ENCODE measurements at regions of chr2 and their contacts with region 1.

Region 1: GRCh38 chr2:106160786-106161261 is 33.3 kb downstream of the UXS1 start:
- DNase-seq: peak; percentile 58 to 93 (median 87)
- H3K4me3 ChIP-seq: peak overlapping the region in 6 of 7 experiments; percentile 56 to 82 (median 69)
- H3K27ac ChIP-seq: peak overlapping the region; percentile 42 to 86
- H3K4me1 ChIP-seq: peaks cover 24 to 69% (median 42%) of the 10 kb centered on the region in 4 experiments
- H3K27me3 ChIP-seq: no peaks in the 10 kb centered on the region

Region 2: GRCh38 chr2:106124905-106125405 is 35.9 kb before region 1 on chr2:
- CTCF ChIA-PET with region 1: no interaction called
- POLR2A ChIA-PET with region 1: no interaction called
- DNase-seq: no peak
- H3K4me3 ChIP-seq: no peak overlapping the region
- H3K27ac ChIP-seq: no peak overlapping the region
- H3K4me1 ChIP-seq: no peaks in the 10 kb centered on the region
- H3K27me3 ChIP-seq: no peaks in the 10 kb centered on the region

Region 3: GRCh38 chr2:106140913-106141312 is 19.9 kb before region 1 on chr2:
- CTCF ChIA-PET with region 1: interaction called, 11 read pairs
- POLR2A ChIA-PET with region 1: interaction called, 3 read pairs
- DNase-seq: no peak
- H3K4me3 ChIP-seq: no peak overlapping the region
- H3K27ac ChIP-seq: no peak overlapping the region
- H3K4me1 ChIP-seq: peaks cover 0 to 21% (median 14%) of the 10 kb centered on the region in 4 experiments
- H3K27me3 ChIP-seq: no peaks in the 10 kb centered on the region

Region 4: GRCh38 chr2:106175086-106175850 is 14.4 kb after region 1 on chr2:
- CTCF ChIA-PET with region 1: interaction called, 13 read pairs
- POLR2A ChIA-PET with region 1: no interaction called
- DNase-seq: no peak
- H3K4me3 ChIP-seq: no peak overlapping the region
- H3K27ac ChIP-seq: no peak overlapping the region
- H3K4me1 ChIP-seq: peaks cover 0 to 2% (median 1%) of the 10 kb centered on the region in 4 experiments
- H3K27me3 ChIP-seq: no peaks in the 10 kb centered on the region